GM10248 (cell line): ENCODE measurements at regions of chr6 and their contacts with region 1.

Region 1: DNA sequence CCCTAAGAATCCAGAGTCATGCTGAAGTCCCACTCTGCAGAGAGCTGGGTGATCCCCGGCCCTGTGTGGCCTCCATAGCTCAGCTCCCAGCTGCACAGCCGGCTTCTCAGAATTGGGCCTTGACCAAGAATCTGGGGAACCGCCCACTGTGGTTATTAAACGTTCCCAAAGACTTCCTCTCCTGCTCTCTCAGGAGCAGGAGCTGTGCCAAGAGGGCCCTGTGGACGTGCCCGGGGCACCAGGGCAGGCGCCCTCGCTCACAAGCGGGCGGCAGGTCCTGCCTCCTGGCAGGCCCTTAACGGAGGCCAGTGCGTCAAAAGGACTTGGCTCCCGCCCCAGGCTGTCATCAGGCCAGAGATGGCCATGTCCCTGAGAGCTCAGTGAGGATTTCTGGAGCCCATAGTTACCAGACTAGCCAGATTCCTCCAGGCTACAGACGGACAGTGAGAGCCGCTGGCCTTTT is 30.4 kb downstream of the ZC3H12D start:
- DNase-seq: no peak
- CTCF ChIP-seq: no peak

Region 2: DNA sequence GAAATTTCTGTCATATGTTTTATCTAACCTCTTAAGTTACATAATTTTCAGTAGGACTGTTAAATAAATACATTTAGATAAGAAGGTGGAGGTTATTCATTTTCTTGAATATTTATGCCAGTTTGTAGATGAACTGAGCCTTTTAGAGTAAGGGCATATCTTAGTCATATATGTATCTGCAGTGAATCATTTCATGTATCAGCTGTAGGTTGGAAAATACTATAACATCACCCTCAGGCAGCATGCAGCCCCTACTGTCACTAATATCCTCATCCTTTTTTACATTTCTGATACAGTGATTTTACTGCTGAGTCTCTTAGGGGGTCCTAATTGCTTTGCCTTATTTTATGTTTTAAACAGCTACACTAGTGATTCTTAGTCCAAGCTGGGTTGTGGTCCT is 73.9 kb before region 1 on chr6:
- CTCF ChIA-PET with region 1: no interaction called
- POLR2A ChIA-PET with region 1: no interaction called
- DNase-seq: no peak
- CTCF ChIP-seq: no peak

Region 3: DNA sequence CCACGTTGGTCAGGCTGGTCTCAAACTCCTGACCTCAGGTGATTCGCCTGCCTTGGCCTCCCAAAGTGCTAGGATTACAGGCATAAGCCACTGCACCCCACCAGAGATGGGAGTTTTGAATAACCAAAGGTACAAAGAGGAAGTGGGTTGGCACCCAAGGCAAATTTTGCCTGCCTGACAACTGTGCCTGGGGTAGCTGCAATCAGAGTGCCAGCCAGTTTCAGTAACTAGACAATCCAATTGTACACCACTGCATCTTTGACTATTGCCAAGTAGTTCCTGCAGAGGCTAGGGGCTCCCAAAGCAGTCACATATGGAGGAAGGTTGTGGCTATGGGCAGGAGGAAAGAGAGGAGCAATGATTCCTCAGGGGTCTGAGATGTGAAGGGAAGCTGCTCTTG is 13.8 kb after region 1 on chr6:
- CTCF ChIA-PET with region 1: interaction called, 10 read pairs
- POLR2A ChIA-PET with region 1: no interaction called
- DNase-seq: no peak
- CTCF ChIP-seq: no peak